Activated CD4-positive, alpha-beta T cell treated with anti-CD3 and anti-CD28 coated beads for 36 hours (primary cell): ENCODE measurements at regions of chr10 and their contacts with region 1.

Region 1: DNA sequence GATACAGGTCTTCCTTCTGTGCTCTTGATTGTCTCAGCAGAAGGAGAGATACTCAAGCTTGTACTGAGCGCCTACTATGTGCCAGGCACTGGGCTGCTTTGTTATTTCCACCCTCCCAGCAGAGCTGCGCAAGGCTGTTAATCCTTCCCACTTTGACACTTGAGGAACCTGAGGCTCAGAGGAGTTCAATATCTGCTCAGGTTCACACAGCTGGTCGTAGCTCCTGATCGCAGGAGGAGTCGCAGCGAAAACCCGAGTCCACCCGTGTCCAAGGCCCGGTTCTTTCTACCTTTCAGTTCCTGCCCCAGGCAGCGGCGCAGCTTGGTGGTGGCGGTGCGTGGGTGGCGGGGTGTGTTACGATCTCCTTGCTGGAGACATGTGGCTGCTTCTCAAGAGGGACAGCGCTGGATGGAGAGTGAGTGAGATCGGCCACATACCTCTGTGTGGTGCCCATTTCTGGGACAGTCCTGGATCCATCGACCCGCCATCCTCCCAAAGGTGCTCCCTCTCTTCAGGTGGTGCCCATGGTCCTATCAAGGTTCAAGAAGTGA is 26.5 kb upstream of the SAMD8 start:
- DNase-seq: no peak
- ATAC-seq: no peak
- H3K4me3 Mint-ChIP-seq: no peak overlapping the region
- H3K27ac Mint-ChIP-seq: no peak overlapping the region
- H3K4me1 Mint-ChIP-seq: peaks cover 8% of the 10 kb centered on the region
- H3K27me3 Mint-ChIP-seq: no peaks in the 10 kb centered on the region

Region 2: GRCh38 chr10:74460812-74461211 is 624.1 kb before region 1 on chr10:
- CTCF ChIA-PET with region 1: no interaction called
- POLR2A ChIA-PET with region 1: no interaction called
- intact Hi-C with region 1: loop called in 1 of 2 experiments (anchors 5 kb)
- DNase-seq: no peak
- ATAC-seq: no peak
- H3K4me3 Mint-ChIP-seq: no peak overlapping the region
- H3K27ac Mint-ChIP-seq: no peak overlapping the region
- H3K4me1 Mint-ChIP-seq: peaks cover 2% of the 10 kb centered on the region
- H3K27me3 Mint-ChIP-seq: no peaks in the 10 kb centered on the region